H1 (cell line): ENCODE measurements at regions of chr5 and their contacts with region 1.

Region 1: GRCh38 chr5:111757355-111758283 is 625 bp upstream of the NREP start:
- DNase-seq: peak in 1 of 2 experiments; percentile 86
- H3K4me3 ChIP-seq: peak overlapping the region; percentile 62 to 99 (median 75)
- H3K27ac ChIP-seq: peak overlapping the region; percentile 94
- H3K4me1 ChIP-seq: peaks cover 0 to 8% (median 3%) of the 10 kb centered on the region in 4 experiments; a peak in 3 of 7 replicates
- H3K27me3 ChIP-seq: no peaks in the 10 kb centered on the region
- CTCF ChIP-seq: peak in 1 of 3 experiments; percentile 10; a peak in 1 of 4 replicates
- EP300 ChIP-seq: no peak
- POLR2A ChIP-seq: peak; percentile 91 to 95
- RAD21 ChIP-seq: peak; percentile 1 to 15; a peak in 1 of 4 replicates

Region 2: GRCh38 chr5:111512375-111513130 is 245.1 kb before region 1 on chr5 and contains the start of gene STARD4:
- CTCF ChIA-PET with region 1: no interaction called
- POLR2A ChIA-PET with region 1: interaction called, 12 read pairs
- DNase-seq: peak; percentile 85 to 91
- H3K4me3 ChIP-seq: peak within 1 kb of the TSS; percentile 83 to 96 (median 92)
- H3K27ac ChIP-seq: peak within 1 kb of the TSS; percentile 73
- H3K4me1 ChIP-seq: peaks cover 0 to 11% (median 4%) of the 10 kb centered on the region in 4 experiments; a peak in 3 of 7 replicates
- H3K27me3 ChIP-seq: no peaks in the 10 kb centered on the region
- CTCF ChIP-seq: no peak
- EP300 ChIP-seq: peak in 1 of 2 experiments; percentile 74; a peak in 1 of 3 replicates
- POLR2A ChIP-seq: peak; percentile 82 to 84
- RAD21 ChIP-seq: no peak
- total RNA-seq, gene STARD4: 47.4 and 47.9 TPM in 2 replicates

Region 3: GRCh38 chr5:111615054-111615453 is 142.6 kb before region 1 on chr5:
- CTCF ChIA-PET with region 1: no interaction called
- POLR2A ChIA-PET with region 1: no interaction called
- DNase-seq: no peak
- H3K4me3 ChIP-seq: no peak overlapping the region
- H3K27ac ChIP-seq: no peak overlapping the region
- H3K4me1 ChIP-seq: no peaks in the 10 kb centered on the region
- H3K27me3 ChIP-seq: no peaks in the 10 kb centered on the region
- CTCF ChIP-seq: no peak
- EP300 ChIP-seq: no peak
- POLR2A ChIP-seq: no peak
- RAD21 ChIP-seq: peak in 1 of 2 experiments; percentile 1; a peak in 1 of 4 replicates

Region 4: DNA sequence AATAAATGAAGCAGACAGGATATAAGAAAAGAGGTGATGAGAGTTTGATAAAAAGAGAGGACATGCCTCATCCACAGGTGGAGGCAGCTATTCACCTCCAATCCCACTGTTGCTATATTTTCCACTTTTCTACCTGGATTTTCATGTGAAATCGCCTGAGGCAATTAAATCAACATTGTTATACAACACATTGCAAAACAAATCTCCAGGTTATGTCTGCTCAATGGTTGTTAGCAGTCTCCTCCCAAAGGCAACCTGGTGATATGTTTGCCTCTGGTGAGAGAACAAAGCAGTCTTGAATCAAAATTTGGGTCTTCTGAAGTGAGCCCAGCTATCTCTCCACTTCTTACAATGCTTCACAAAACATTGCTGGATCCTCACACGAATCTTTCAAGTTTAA is 30.6 kb before region 1 on chr5:
- CTCF ChIA-PET with region 1: interaction called, 3 read pairs
- POLR2A ChIA-PET with region 1: interaction called, 12 read pairs
- DNase-seq: no peak
- H3K4me3 ChIP-seq: no peak overlapping the region
- H3K27ac ChIP-seq: no peak overlapping the region
- H3K4me1 ChIP-seq: no peaks in the 10 kb centered on the region
- H3K27me3 ChIP-seq: no peaks in the 10 kb centered on the region
- CTCF ChIP-seq: no peak
- EP300 ChIP-seq: no peak
- POLR2A ChIP-seq: no peak; a peak in 1 of 3 replicates
- RAD21 ChIP-seq: no peak

Region 5: DNA sequence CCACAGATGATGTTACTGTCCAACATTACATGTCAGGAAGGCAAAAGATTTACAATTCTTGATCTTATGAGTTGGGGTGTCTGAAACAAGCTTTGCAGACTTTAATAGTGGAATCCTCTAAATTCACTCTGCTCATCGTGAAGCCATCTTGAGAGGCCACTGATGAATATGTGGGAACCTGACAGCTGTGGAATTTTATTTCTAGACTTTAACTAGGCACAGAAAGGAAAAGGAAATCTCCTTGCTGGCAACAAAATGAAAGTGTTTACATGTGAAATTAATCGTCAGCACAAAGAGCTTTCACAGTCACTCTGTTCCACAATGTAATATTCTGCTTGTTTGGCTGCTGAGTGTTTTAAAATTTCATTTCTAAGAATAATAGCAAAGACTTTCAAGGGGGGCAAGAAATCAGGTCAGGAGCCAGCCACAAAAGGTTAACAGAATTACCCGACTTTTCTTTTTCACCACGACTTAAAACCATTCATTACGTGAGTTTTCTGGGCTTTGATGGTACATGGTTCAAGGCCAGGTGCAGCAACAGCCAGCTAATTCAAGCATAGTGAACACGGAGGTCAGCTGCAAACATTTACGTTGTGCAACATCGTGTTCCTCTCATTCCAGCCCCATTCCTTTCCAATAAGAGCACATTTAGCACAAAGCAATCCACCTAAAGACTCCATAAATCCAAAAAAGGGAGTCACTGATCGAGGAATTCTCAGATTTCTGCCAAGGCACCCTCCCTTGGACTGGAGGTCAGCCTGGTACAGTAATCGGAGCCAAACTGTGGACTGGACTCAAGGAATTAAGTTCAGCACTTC is 15.2 kb before region 1 on chr5:
- CTCF ChIA-PET with region 1: interaction called, 3 read pairs
- POLR2A ChIA-PET with region 1: interaction called, 25 read pairs
- DNase-seq: no peak
- H3K4me3 ChIP-seq: no peak overlapping the region
- H3K27ac ChIP-seq: no peak overlapping the region
- H3K4me1 ChIP-seq: peaks cover 2 to 22% (median 12%) of the 10 kb centered on the region in 4 experiments; a peak in 6 of 7 replicates
- H3K27me3 ChIP-seq: no peaks in the 10 kb centered on the region
- CTCF ChIP-seq: no peak
- EP300 ChIP-seq: no peak
- POLR2A ChIP-seq: no peak
- RAD21 ChIP-seq: no peak

Region 6: DNA sequence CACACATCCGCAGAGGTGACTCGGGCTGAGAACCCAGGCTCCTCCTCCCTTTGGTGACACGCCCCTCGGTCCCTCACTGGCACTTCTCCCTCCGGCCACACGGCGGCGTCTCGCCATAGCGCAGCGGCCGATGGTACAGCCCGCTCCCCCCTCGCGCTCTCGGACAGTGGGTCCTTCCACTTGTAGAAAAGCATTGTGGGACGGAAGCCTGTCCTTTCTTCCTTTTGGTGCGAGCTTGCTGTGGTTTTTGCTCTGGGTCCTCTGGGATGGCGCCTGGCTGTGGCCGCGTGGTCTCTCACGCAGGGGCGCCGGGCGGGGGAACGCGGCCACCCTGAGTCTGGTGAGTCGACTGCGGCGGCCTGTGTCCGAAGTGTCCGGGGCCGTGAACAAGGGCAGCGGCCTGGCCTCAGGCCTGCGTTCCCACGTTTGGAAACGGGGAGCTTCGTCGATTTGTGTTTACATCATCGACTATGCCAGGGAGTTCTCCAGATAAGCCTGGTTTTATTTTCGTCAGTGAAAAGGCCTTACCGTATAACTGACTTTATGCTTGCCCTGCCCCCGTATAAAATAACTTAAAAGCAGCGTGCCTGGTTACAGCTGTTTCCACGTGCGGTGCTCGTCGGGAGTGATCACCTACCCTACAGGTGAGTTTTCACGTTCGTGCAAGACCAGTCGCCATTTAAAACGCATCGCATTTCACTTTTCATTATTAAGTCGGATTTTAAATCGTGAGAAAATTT is 403.2 kb after region 1 on chr5:
- CTCF ChIA-PET with region 1: interaction called, 3 read pairs
- POLR2A ChIA-PET with region 1: interaction called, 15 read pairs
- DNase-seq: peak; percentile 70 to 98
- H3K4me3 ChIP-seq: peak overlapping the region; percentile 86 to 99 (median 96)
- H3K27ac ChIP-seq: peak overlapping the region; percentile 91
- H3K4me1 ChIP-seq: peaks cover 3 to 10% (median 3%) of the 10 kb centered on the region in 4 experiments; a peak in 4 of 7 replicates
- H3K27me3 ChIP-seq: no peaks in the 10 kb centered on the region
- CTCF ChIP-seq: peak; percentile 94 to 100 (median 100)
- EP300 ChIP-seq: peak in 1 of 2 experiments; percentile 100; a peak in 2 of 3 replicates
- POLR2A ChIP-seq: peak; percentile 97 to 99
- RAD21 ChIP-seq: peak; percentile 41 to 53